Transverse colon (tissue), 4 donors: ENCODE measurements at regions of chr2 and their contacts with region 1.

Region 1: GRCh38 chr2:235669269-235669831 is 175.5 kb downstream of the AGAP1 start:
- DNase-seq: peak; percentile 77
- H3K4me3 ChIP-seq: peak overlapping the region; percentile 40 to 63 (median 53)
- H3K27ac ChIP-seq: peak overlapping the region in 3 of 4 donors; percentile 68 to 83 (median 73)
- H3K4me1 ChIP-seq: peaks cover 9 to 35% (median 22%) of the 10 kb centered on the region in 4 donors
- H3K27me3 ChIP-seq: no peaks in the 10 kb centered on the region
- CTCF ChIP-seq: no peak
- EP300 ChIP-seq: no peak
- POLR2A ChIP-seq: no peak

Region 2: GRCh38 chr2:235579128-235579527 is 90.2 kb before region 1 on chr2:
- in situ Hi-C with region 1: no loop called
- intact Hi-C with region 1: no loop called
- DNase-seq: no peak
- H3K4me3 ChIP-seq: no peak overlapping the region
- H3K27ac ChIP-seq: no peak overlapping the region
- H3K4me1 ChIP-seq: peaks cover 0 to 13% (median 8%) of the 10 kb centered on the region in 4 donors
- H3K27me3 ChIP-seq: no peaks in the 10 kb centered on the region
- CTCF ChIP-seq: no peak
- EP300 ChIP-seq: no peak
- POLR2A ChIP-seq: no peak

Region 3: DNA sequence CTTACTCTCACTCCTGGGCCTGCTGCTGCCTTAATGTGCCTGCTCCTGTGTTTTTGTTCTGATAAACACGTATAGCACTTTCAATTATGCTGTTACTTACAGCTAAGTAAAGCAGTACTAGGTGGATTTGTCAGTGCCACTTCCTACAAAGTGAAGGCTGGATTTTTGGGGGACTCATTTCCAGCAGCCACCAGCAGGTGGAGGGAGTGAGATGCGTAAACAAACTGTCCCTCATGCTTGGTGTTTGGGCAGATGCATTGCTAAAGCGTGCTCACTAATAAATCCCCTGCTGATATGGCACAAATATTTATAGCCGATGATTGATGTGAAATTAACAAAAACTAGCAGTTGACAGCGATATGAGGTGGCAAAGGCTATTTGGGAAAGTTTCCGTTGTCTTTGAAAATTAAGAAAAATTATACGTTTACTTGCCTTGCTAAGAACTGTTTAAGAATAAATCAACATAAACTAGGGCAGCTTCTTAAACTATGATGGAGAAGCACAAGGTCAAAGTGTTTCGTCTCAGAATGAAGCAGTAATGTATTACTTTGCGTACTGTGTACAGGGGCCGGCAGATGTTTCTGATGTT is 73.8 kb before region 1 on chr2:
- in situ Hi-C with region 1: no loop called
- intact Hi-C with region 1: loop called (anchors 2 kb)
- DNase-seq: peak; percentile 76
- H3K4me3 ChIP-seq: no peak overlapping the region
- H3K27ac ChIP-seq: no peak overlapping the region
- H3K4me1 ChIP-seq: peaks cover 0 to 22% (median 4%) of the 10 kb centered on the region in 4 donors
- H3K27me3 ChIP-seq: no peaks in the 10 kb centered on the region
- CTCF ChIP-seq: peak; percentile 77 to 92 (median 83)
- EP300 ChIP-seq: no peak
- POLR2A ChIP-seq: no peak

Region 4: GRCh38 chr2:235640926-235641723 is 28.2 kb before region 1 on chr2:
- in situ Hi-C with region 1: no loop called
- intact Hi-C with region 1: loop called (anchors 2 kb)
- DNase-seq: no peak
- H3K4me3 ChIP-seq: no peak overlapping the region
- H3K27ac ChIP-seq: peak overlapping the region; percentile 77 to 87 (median 82)
- H3K4me1 ChIP-seq: peaks cover 28 to 49% (median 31%) of the 10 kb centered on the region in 4 donors
- H3K27me3 ChIP-seq: no peaks in the 10 kb centered on the region
- CTCF ChIP-seq: no peak
- EP300 ChIP-seq: no peak
- POLR2A ChIP-seq: no peak

Region 5: DNA sequence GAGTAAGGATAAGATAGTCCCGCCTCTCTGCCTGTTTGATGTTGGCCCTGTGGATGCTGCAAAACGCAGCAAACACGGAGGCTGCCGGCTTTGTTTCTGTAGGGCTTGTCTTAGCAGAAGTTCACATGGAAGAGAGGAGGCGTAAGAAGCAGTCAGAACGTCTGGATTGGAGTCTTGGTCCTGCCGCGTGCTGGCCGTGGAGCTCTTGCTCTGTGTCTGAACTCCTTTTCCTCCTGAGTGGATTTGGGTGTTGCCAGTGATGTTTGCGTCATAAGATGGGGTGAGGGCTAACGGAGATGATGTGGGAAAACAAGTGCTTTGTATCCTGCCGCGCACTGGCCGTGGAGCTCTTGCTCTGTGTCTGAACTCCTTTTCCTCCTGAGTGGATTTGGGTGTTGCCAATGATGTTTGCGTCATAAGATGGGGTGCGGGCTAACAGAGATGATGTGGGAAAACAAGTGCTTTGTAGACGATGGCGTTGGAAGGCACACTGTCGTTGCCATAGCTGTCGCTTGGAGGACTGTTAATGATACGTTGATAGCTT is 65.4 kb after region 1 on chr2:
- in situ Hi-C with region 1: loop called in 1 of 4 experiments (anchors 10 kb)
- intact Hi-C with region 1: no loop called
- DNase-seq: no peak
- H3K4me3 ChIP-seq: no peak overlapping the region
- H3K27ac ChIP-seq: no peak overlapping the region
- H3K4me1 ChIP-seq: no peaks in the 10 kb centered on the region
- H3K27me3 ChIP-seq: no peaks in the 10 kb centered on the region
- CTCF ChIP-seq: no peak
- EP300 ChIP-seq: no peak
- POLR2A ChIP-seq: no peak

Region 6: DNA sequence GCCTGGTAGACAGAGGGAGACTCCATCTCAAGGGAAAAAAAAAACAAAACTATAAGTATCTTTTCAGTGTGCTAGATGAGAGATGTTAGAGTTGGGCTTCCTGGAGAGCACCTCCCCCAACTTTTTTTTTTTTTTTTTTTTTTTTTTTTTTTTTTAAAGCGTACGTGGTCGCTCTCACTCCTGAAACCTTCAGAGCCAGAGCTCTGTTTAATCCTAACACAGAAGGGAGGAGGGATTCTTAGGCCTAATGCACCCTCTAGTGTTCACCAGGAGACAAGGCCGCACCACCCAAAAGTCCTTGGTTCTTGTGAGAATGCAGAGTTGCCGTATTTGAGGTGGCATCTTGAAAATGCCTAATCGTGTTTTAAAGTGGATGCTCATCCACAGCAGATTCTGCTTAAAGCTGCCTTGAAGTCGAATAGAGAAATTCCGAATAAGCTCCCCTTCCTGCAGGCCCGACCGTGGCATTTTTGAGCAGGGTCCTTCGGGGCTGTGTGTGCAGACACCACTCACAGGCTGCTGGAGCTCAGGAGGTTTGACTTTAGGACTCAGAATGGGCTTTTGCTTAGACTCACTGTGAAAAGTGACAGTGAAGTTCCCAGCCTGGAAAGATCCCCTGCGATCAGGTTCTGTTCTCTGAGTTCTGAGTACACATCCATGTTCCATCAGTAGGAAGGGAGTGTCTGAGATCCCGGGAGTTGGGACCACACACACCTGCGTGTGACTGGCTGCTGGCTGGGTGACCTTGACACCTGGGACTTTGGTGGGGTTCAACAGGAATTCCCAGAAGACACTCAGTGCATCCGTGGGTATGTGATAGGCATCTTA is 77.1 kb after region 1 on chr2:
- in situ Hi-C with region 1: no loop called
- intact Hi-C with region 1: loop called (anchors 5 kb)
- DNase-seq: peak; percentile 68
- H3K4me3 ChIP-seq: no peak overlapping the region
- H3K27ac ChIP-seq: peak overlapping the region in 1 of 4 donors; percentile 51
- H3K4me1 ChIP-seq: peaks cover 0 to 10% (median 3%) of the 10 kb centered on the region in 4 donors
- H3K27me3 ChIP-seq: no peaks in the 10 kb centered on the region
- CTCF ChIP-seq: peak; percentile 71 to 79 (median 76)
- EP300 ChIP-seq: no peak
- POLR2A ChIP-seq: no peak

Region 7: GRCh38 chr2:237547841-237548416 is 1878.6 kb after region 1 on chr2:
- in situ Hi-C with region 1: no loop called
- intact Hi-C with region 1: loop called (anchors 5 kb)
- DNase-seq: no peak
- H3K4me3 ChIP-seq: no peak overlapping the region
- H3K27ac ChIP-seq: peak overlapping the region in 1 of 4 donors; percentile 9
- H3K4me1 ChIP-seq: peaks cover 0 to 4% (median 2%) of the 10 kb centered on the region in 4 donors
- H3K27me3 ChIP-seq: no peaks in the 10 kb centered on the region
- CTCF ChIP-seq: no peak
- EP300 ChIP-seq: no peak
- POLR2A ChIP-seq: no peak